ENCODE measurements at regions of chr17 and their contacts with region 1.

Region 1: DNA sequence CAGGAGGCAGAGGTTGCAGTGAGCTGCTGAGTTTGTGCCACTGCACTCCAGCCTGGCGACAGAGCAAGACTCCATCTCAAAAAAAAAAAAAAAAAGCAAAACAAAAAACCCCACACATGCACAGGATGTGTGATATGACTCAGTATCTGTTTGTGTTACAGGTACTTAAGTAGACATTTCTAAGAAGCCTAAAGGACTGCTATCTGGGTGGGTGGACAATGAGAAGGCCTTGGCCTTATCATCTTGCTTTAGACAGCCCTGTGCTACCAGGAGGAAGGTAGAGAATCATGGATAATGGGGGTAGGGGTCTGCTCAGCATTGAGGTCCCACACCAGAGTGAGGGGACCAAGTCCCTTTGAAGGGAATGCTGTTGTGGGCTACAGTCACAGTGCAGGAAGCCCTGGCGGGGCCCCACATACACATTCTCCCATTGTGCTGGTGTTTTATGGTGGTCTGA is 26.7 kb downstream of the PLD6 start:
- DNase-seq: peak; percentile 30
- ATAC-seq: peak; percentile 84
- H3K4me3 ChIP-seq: 0 out of 2 replicates have a peak overlapping the region, but pooled peaks have one; percentile 36
- H3K27ac ChIP-seq: peak overlapping the region; percentile 35; the same call in 1 of the 2 replicates
- H3K4me1 ChIP-seq: peaks cover 34% of the 10 kb centered on the region
- H3K27me3 ChIP-seq: no peaks in the 10 kb centered on the region
- CTCF ChIP-seq: no peak
- EP300 ChIP-seq: no peak
- POLR2A ChIP-seq: no peak
- RAD21 ChIP-seq: no peak

Region 2: DNA sequence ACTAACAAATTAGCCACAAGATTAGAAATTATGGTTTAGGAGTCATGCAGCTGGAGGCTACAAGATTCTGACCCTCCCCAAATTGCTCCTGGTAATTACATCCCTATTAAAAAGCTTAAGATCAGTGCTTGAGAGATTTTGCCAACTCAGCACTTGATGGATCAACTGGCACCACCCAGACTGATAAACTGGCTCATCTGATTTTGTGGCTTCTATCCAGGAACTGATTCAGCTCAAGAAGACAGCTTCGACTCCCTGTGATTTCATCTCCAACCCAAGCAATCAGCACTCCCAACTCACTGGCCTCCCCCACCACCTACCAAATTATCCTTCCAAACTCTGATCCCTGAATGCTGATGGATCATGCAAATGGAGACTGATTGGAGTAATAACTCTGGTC is 302.3 kb before region 1 on chr17:
- CTCF ChIA-PET with region 1: no interaction called
- POLR2A ChIA-PET with region 1: no interaction called
- RAD21 ChIA-PET with region 1: no interaction called
- SMC1A ChIA-PET with region 1: no interaction called
- in situ Hi-C with region 1: no loop called
- intact Hi-C with region 1: no loop called
- DNase-seq: no peak
- ATAC-seq: no peak
- H3K4me3 ChIP-seq: no peak overlapping the region
- H3K27ac ChIP-seq: no peak overlapping the region
- H3K4me1 ChIP-seq: no peaks in the 10 kb centered on the region
- H3K27me3 ChIP-seq: no peaks in the 10 kb centered on the region; a peak in 2 of 4 replicates
- CTCF ChIP-seq: no peak
- EP300 ChIP-seq: no peak
- POLR2A ChIP-seq: no peak
- RAD21 ChIP-seq: no peak

Region 3: GRCh38 chr17:17191346-17191792 is 12.0 kb after region 1 on chr17:
- CTCF ChIA-PET with region 1: interaction called, 3 read pairs
- POLR2A ChIA-PET with region 1: interaction called, 5 read pairs
- RAD21 ChIA-PET with region 1: interaction called, 10 read pairs
- SMC1A ChIA-PET with region 1: interaction called, 6 read pairs
- in situ Hi-C with region 1: no loop called
- intact Hi-C with region 1: no loop called
- DNase-seq: no peak
- ATAC-seq: no peak
- H3K4me3 ChIP-seq: no peak overlapping the region
- H3K27ac ChIP-seq: no peak overlapping the region
- H3K4me1 ChIP-seq: peaks cover 12% of the 10 kb centered on the region
- H3K27me3 ChIP-seq: no peaks in the 10 kb centered on the region
- CTCF ChIP-seq: no peak
- EP300 ChIP-seq: no peak
- POLR2A ChIP-seq: no peak
- RAD21 ChIP-seq: no peak

Region 4: GRCh38 chr17:17200831-17201230 is 21.4 kb after region 1 on chr17:
- CTCF ChIA-PET with region 1: interaction called, 3 read pairs
- POLR2A ChIA-PET with region 1: interaction called, 3 read pairs
- RAD21 ChIA-PET with region 1: no interaction called
- SMC1A ChIA-PET with region 1: interaction called, 10 read pairs
- in situ Hi-C with region 1: no loop called
- intact Hi-C with region 1: loop called (anchors 2 kb)
- DNase-seq: no peak
- ATAC-seq: no peak
- H3K4me3 ChIP-seq: no peak overlapping the region
- H3K27ac ChIP-seq: no peak overlapping the region
- H3K4me1 ChIP-seq: peaks cover 7% of the 10 kb centered on the region; the same call in 1 of the 2 replicates
- H3K27me3 ChIP-seq: no peaks in the 10 kb centered on the region
- CTCF ChIP-seq: no peak
- EP300 ChIP-seq: no peak
- POLR2A ChIP-seq: no peak
- RAD21 ChIP-seq: no peak

Region 5: DNA sequence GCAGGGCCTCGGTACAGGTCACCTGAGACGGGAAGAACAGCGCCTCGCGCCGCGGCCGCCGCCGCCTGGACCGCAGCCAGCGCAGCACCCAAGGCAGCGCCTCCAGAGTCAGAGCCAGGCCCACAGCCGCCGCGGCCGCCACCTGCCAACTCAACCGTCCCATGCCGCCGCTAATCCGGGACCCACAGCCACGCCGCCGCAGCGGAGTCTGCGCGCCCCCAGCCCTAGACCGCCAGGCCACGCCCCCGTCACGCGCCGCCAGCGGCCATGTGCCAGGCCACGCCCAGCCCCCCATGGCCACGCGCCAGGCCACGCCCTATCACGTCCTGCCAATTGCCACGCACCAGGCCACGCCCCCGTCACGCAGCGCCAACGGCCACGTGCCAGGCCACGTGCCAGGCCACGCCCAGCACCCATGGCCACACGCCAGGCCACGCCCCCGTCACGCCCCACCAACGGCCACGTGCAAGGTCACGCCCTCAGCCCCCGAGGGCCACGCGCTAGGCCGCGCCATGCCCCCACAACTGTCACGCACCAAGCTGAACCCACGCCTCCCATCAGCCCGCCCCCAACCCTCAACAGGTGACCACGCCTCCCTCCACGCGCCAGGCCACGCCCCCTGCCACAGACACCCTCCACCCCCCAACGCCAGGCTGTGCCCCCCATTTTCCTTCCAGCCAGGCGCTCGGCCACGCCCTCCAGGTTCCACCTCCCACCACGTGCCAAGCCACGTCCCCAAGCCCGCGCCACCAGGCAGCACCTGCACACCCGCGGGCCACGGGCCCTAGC is 26.9 kb after region 1 on chr17 and contains the start of gene PLD6:
- CTCF ChIA-PET with region 1: no interaction called
- POLR2A ChIA-PET with region 1: interaction called, 3 read pairs
- RAD21 ChIA-PET with region 1: no interaction called
- SMC1A ChIA-PET with region 1: interaction called, 10 read pairs
- in situ Hi-C with region 1: no loop called
- intact Hi-C with region 1: loop called (anchors 2 kb)
- DNase-seq: peak; percentile 72
- ATAC-seq: peak; percentile 83
- H3K4me3 ChIP-seq: peak within 1 kb of the TSS; percentile 74
- H3K27ac ChIP-seq: peak within 1 kb of the TSS; percentile 58
- H3K4me1 ChIP-seq: peaks cover 9% of the 10 kb centered on the region; the same call in 1 of the 2 replicates
- H3K27me3 ChIP-seq: no peaks in the 10 kb centered on the region
- CTCF ChIP-seq: no peak
- EP300 ChIP-seq: no peak
- POLR2A ChIP-seq: peak; percentile 86
- RAD21 ChIP-seq: no peak
- polyA plus RNA-seq, gene PLD6: 4.7 to 21.4 TPM